HCT116 (cell line): ENCODE measurements at regions of chr17 and their contacts with region 1.

Region 1: DNA sequence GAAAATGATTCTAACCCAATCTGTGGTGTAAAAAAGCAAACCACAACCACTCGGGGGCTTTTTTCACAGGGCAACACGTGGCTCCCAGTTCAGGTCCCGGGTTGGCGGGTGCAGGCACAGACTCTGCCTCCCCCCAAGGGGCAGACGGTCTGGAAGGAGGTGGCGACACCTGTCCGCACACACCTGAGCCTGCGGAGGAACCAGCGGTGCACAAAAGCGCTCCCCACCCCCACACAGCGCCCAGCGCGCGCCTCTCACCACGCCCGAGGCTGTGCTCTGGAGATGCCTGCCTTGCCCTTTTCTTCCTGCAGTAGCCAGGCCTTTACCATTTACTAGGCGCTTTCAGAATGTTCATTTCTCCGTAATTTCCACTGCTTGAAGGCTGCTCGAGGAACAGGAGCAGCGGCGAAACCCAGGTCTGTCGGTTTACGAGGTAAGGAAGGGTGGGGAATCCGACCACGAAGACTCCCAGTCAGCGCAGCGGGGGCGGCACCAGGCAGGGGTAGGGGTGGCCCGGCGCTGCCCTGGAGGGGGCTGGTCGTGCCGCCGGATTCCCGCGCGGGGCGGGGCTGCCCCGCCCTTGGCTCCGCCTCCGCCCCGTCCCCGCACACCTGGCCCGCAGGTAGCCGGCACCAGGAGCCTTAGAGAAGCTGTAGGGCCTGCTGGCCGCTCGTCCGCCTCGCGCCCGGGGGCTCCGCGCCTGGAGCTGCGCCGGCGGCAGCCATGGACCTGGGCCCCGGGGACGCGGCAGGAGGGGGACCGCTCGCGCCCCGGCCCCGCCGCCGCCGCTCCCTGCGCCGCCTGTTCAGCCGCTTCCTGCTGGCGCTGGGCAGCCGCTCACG is at the start of gene USP43:
- DNase-seq: peak; percentile 32
- ATAC-seq: peak; percentile 83
- H3K4me3 ChIP-seq: peak within 1 kb of the TSS; percentile 71 to 75
- H3K27ac ChIP-seq: peak within 1 kb of the TSS; percentile 94
- H3K4me1 ChIP-seq: peaks cover 37 to 51% of the 10 kb centered on the region in 2 experiments
- H3K27me3 ChIP-seq: no peaks in the 10 kb centered on the region
- CTCF ChIP-seq: no peak
- POLR2A ChIP-seq: no peak
- RAD21 ChIP-seq: no peak; the same call in 1 of the 2 replicates
- total RNA-seq, gene USP43: 8.0 TPM

Region 2: DNA sequence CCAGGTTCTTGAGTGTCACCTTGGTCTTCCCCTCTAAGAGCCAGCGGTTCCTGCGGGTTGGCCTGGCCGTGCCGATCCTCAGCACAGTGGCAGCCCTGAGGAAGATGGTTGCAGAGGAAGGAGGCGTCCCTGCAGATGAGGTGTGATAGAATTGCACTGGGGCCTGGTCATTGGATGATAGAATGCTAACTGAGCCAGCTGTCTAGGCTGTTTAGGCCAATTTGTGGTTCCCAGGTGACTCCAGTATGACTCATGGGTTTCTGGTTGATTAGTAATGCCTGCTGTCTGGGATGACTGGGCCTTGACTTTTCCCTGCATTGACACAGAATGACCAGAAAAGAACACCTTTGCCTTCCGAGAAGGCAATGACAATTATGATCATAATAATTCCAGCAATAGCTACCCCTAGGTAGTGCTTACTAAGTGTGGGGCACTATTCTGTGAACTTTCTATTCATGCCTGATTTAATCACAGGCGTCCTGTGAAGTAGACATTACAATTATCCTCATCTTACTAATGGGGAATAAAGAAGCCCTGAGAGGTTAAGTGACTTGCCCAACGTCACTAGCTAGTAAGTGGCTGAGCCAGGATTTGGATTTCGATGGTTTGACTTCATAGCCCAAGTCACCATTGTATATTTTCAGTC is 31.7 kb after region 1 on chr17:
- CTCF ChIA-PET with region 1: interaction called, 3 read pairs
- POLR2A ChIA-PET with region 1: no interaction called
- RAD21 ChIA-PET with region 1: no interaction called
- intact Hi-C with region 1: loop called (anchors 1 kb)
- DNase-seq: peak; percentile 91
- ATAC-seq: peak; percentile 95
- H3K4me3 ChIP-seq: no peak overlapping the region
- H3K27ac ChIP-seq: peak overlapping the region; percentile 47
- H3K4me1 ChIP-seq: peaks cover 13 to 23% of the 10 kb centered on the region in 2 experiments
- H3K27me3 ChIP-seq: no peaks in the 10 kb centered on the region
- CTCF ChIP-seq: no peak
- POLR2A ChIP-seq: no peak
- RAD21 ChIP-seq: no peak